CD8-positive, alpha-beta T cell (primary cell): ENCODE measurements at regions of chr17 and their contacts with region 1.

Region 1: DNA sequence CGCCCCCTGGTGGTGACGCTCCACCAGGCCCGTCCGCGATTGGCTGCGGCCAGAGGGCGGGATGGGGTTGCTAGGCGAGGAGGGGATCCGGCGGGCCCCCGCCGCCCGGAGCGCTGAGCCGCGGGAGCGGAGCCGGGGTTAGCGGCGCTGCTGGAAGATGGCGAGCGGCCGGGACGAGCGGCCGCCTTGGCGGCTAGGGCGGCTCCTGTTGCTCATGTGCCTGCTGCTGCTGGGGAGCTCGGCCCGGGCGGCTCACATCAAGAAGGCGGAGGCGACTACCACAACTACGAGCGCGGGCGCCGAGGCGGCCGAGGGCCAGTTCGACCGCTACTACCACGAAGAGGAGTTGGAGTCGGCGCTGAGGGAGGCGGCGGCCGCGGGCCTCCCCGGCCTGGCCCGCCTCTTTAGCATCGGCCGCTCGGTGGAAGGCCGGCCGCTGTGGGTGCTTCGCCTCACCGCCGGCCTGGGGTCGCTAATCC is at the start of gene CPD:
- DNase-seq: peak; percentile 92 to 99 (median 98)
- ATAC-seq: peak; percentile 93
- H3K4me3 ChIP-seq: peak within 1 kb of the TSS; percentile 51 to 76
- H3K4me3 Mint-ChIP-seq: peak within 1 kb of the TSS; percentile 88
- H3K27ac ChIP-seq: peak within 1 kb of the TSS; percentile 65 to 94
- H3K27ac Mint-ChIP-seq: peak within 1 kb of the TSS; percentile 93
- H3K4me1 ChIP-seq: peaks cover 53% of the 10 kb centered on the region
- H3K4me1 Mint-ChIP-seq: peaks cover 56% of the 10 kb centered on the region
- H3K27me3 ChIP-seq: no peaks in the 10 kb centered on the region
- H3K27me3 Mint-ChIP-seq: no peaks in the 10 kb centered on the region
- CTCF ChIP-seq: no peak
- total RNA-seq, gene CPD: 40.9 to 42.1 TPM

Region 2: GRCh38 chr17:30116661-30117551 is 262.0 kb before region 1 on chr17 and contains the start of gene NSRP1:
- CTCF ChIA-PET with region 1: no interaction called
- POLR2A ChIA-PET with region 1: no interaction called
- intact Hi-C with region 1: loop called (anchors 1 to 2 kb)
- DNase-seq: peak; percentile 83 to 96 (median 92)
- ATAC-seq: peak; percentile 97
- H3K4me3 ChIP-seq: peak within 1 kb of the TSS; percentile 66 to 96
- H3K4me3 Mint-ChIP-seq: peak within 1 kb of the TSS; percentile 100
- H3K27ac ChIP-seq: peak within 1 kb of the TSS; percentile 95 to 99
- H3K27ac Mint-ChIP-seq: peak within 1 kb of the TSS; percentile 100
- H3K4me1 ChIP-seq: peaks cover 16% of the 10 kb centered on the region
- H3K4me1 Mint-ChIP-seq: peaks cover 41% of the 10 kb centered on the region
- H3K27me3 ChIP-seq: no peaks in the 10 kb centered on the region
- H3K27me3 Mint-ChIP-seq: no peaks in the 10 kb centered on the region
- CTCF ChIP-seq: no peak
- total RNA-seq, gene NSRP1: 22.4 to 23.1 TPM

Region 3: DNA sequence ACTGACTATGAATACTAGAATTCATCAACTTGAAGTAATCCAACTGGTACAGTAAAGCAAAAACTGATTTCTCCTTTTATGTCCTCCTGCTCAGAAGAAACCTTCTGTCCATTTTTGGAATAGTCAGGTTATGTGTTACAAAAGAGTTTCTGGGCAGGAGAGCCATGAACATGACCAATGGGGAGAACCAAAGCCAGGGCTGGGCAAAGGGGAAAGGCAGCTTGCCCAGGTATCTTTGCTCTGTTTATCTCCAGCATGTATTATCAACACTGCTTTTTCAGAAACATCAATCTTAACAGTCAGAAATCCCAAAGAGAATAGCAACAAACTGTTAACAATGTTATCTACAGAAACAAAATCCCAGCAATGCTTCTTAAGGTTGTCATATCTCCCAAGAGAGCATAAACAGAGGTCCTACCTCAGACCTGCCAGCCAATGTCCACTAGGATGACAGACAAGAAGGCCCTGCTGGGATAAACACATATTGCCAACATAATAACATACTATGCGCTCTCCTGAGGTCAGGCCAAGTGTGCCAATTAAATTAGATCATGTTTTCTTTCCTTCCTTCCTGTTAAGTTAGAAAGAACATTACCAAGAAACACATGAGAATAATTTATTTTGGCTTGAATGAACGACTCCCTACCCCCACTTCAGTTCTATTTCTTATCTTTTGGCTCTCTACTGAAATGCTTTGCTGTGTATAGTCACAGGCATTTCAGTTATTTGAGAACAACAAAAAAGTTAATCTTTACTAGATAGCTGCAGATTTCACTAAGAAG is 115.1 kb before region 1 on chr17:
- CTCF ChIA-PET with region 1: no interaction called
- POLR2A ChIA-PET with region 1: no interaction called
- intact Hi-C with region 1: no loop called
- DNase-seq: no peak
- ATAC-seq: no peak
- H3K4me3 ChIP-seq: no peak overlapping the region
- H3K4me3 Mint-ChIP-seq: no peak overlapping the region
- H3K27ac ChIP-seq: no peak overlapping the region
- H3K27ac Mint-ChIP-seq: no peak overlapping the region
- H3K4me1 ChIP-seq: no peaks in the 10 kb centered on the region
- H3K4me1 Mint-ChIP-seq: no peaks in the 10 kb centered on the region
- H3K27me3 ChIP-seq: no peaks in the 10 kb centered on the region
- H3K27me3 Mint-ChIP-seq: no peaks in the 10 kb centered on the region
- CTCF ChIP-seq: no peak

Region 4: GRCh38 chr17:30291543-30292285 is 87.1 kb before region 1 on chr17 and contains the start of gene BLMH:
- CTCF ChIA-PET with region 1: interaction called, 3 read pairs
- POLR2A ChIA-PET with region 1: interaction called, 4 read pairs
- intact Hi-C with region 1: loop called (anchors 2 to 5 kb)
- DNase-seq: peak; percentile 54 to 89 (median 83)
- ATAC-seq: peak; percentile 88
- H3K4me3 ChIP-seq: peak within 1 kb of the TSS; percentile 88 to 91
- H3K4me3 Mint-ChIP-seq: peak within 1 kb of the TSS; percentile 93
- H3K27ac ChIP-seq: peak within 1 kb of the TSS; percentile 38 to 44
- H3K27ac Mint-ChIP-seq: peak within 1 kb of the TSS; percentile 88
- H3K4me1 ChIP-seq: peaks cover 19% of the 10 kb centered on the region
- H3K4me1 Mint-ChIP-seq: peaks cover 18% of the 10 kb centered on the region
- H3K27me3 ChIP-seq: no peaks in the 10 kb centered on the region
- H3K27me3 Mint-ChIP-seq: no peaks in the 10 kb centered on the region
- CTCF ChIP-seq: no peak
- total RNA-seq, gene BLMH: 32.6 to 33.3 TPM

Region 5: GRCh38 chr17:30344283-30345088 is 34.4 kb before region 1 on chr17:
- CTCF ChIA-PET with region 1: interaction called, 19 read pairs
- POLR2A ChIA-PET with region 1: interaction called, 7 read pairs
- intact Hi-C with region 1: loop called (anchors 1 to 2 kb)
- DNase-seq: no peak
- ATAC-seq: no peak
- H3K4me3 ChIP-seq: no peak overlapping the region
- H3K4me3 Mint-ChIP-seq: no peak overlapping the region
- H3K27ac ChIP-seq: no peak overlapping the region
- H3K27ac Mint-ChIP-seq: no peak overlapping the region
- H3K4me1 ChIP-seq: peaks cover 8% of the 10 kb centered on the region
- H3K4me1 Mint-ChIP-seq: peaks cover 9% of the 10 kb centered on the region
- H3K27me3 ChIP-seq: no peaks in the 10 kb centered on the region
- H3K27me3 Mint-ChIP-seq: no peaks in the 10 kb centered on the region
- CTCF ChIP-seq: no peak

Region 6: DNA sequence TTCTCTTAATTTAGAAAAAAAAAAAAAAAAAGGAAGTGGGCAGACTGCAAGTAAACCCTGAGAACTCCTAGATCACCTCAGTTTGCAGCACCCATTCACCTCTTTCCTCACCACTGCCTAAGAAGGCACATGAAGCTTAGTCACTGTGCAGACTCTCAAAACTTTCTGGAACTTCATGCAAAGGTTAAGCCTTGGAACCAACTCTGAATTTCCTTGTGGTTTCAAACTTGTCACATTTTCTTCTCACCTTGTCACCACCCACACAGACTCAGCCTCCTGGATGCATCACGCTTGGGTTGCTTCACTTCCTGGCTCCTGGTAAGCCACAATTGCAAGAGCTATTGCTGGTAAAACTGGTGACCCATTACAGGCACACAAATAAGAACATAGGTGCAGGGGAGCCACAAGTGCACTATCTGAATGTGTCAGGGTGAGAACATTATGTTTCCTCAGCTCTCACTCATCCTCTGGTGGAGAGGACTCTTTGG is 15.1 kb before region 1 on chr17:
- CTCF ChIA-PET with region 1: interaction called, 9 read pairs
- POLR2A ChIA-PET with region 1: interaction called, 19 read pairs
- intact Hi-C with region 1: loop called (anchors 1 kb)
- DNase-seq: peak; percentile 43 to 95 (median 74)
- ATAC-seq: peak; percentile 84
- H3K4me3 ChIP-seq: no peak overlapping the region
- H3K4me3 Mint-ChIP-seq: peak overlapping the region; percentile 52
- H3K27ac ChIP-seq: peak overlapping the region in 1 of 2 experiments; percentile 52
- H3K27ac Mint-ChIP-seq: peak overlapping the region; percentile 70
- H3K4me1 ChIP-seq: peaks cover 27% of the 10 kb centered on the region
- H3K4me1 Mint-ChIP-seq: peaks cover 37% of the 10 kb centered on the region
- H3K27me3 ChIP-seq: no peaks in the 10 kb centered on the region
- H3K27me3 Mint-ChIP-seq: no peaks in the 10 kb centered on the region
- CTCF ChIP-seq: no peak

Region 7: DNA sequence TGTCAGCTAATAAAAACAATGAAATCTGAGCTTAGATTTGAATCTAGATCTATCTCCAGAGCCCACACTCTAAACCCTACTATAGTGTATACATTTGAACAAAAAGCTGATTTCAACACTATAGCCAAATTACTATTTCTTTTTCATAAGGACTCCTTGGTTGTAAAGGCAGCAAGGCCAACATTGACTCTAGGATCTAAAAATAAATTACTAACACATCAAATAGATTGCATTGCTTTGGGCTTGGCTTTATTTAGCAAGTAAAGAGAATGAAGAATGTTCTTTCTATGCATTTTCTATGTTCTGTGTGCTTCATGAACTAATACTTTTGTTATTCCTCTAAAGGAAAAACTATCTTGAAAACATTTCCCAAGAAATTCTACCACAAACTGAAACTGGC is 103.7 kb after region 1 on chr17:
- CTCF ChIA-PET with region 1: no interaction called
- POLR2A ChIA-PET with region 1: no interaction called
- intact Hi-C with region 1: loop called (anchors 1 kb)
- DNase-seq: no peak
- ATAC-seq: no peak
- H3K4me3 ChIP-seq: no peak overlapping the region
- H3K4me3 Mint-ChIP-seq: no peak overlapping the region
- H3K27ac ChIP-seq: no peak overlapping the region
- H3K27ac Mint-ChIP-seq: no peak overlapping the region
- H3K4me1 ChIP-seq: peaks cover 15% of the 10 kb centered on the region
- H3K4me1 Mint-ChIP-seq: peaks cover 40% of the 10 kb centered on the region
- H3K27me3 ChIP-seq: no peaks in the 10 kb centered on the region
- H3K27me3 Mint-ChIP-seq: no peaks in the 10 kb centered on the region
- CTCF ChIP-seq: no peak

Region 8: GRCh38 chr17:30701498-30701989 is 322.7 kb after region 1 on chr17:
- CTCF ChIA-PET with region 1: no interaction called
- POLR2A ChIA-PET with region 1: no interaction called
- intact Hi-C with region 1: loop called in 1 of 2 experiments (anchors 5 kb)
- DNase-seq: no peak
- ATAC-seq: no peak
- H3K4me3 ChIP-seq: no peak overlapping the region
- H3K4me3 Mint-ChIP-seq: no peak overlapping the region
- H3K27ac ChIP-seq: no peak overlapping the region
- H3K27ac Mint-ChIP-seq: no peak overlapping the region
- H3K4me1 ChIP-seq: peaks cover 8% of the 10 kb centered on the region
- H3K4me1 Mint-ChIP-seq: peaks cover 12% of the 10 kb centered on the region
- H3K27me3 ChIP-seq: no peaks in the 10 kb centered on the region
- H3K27me3 Mint-ChIP-seq: peaks cover 16% of the 10 kb centered on the region
- CTCF ChIP-seq: no peak